Calu3 (cell line): ENCODE measurements at regions of chr19 and their contacts with region 1.

Region 1: GRCh38 chr19:48842789-48843162 is 6.5 kb upstream of the HSD17B14 start:
- DNase-seq: peak; percentile 67
- H3K4me3 Mint-ChIP-seq: no peak overlapping the region
- H3K27ac Mint-ChIP-seq: peak overlapping the region; percentile 3
- H3K4me1 Mint-ChIP-seq: no peaks in the 10 kb centered on the region
- H3K27me3 Mint-ChIP-seq: no peaks in the 10 kb centered on the region
- CTCF ChIP-seq: peak; percentile 82

Region 2: DNA sequence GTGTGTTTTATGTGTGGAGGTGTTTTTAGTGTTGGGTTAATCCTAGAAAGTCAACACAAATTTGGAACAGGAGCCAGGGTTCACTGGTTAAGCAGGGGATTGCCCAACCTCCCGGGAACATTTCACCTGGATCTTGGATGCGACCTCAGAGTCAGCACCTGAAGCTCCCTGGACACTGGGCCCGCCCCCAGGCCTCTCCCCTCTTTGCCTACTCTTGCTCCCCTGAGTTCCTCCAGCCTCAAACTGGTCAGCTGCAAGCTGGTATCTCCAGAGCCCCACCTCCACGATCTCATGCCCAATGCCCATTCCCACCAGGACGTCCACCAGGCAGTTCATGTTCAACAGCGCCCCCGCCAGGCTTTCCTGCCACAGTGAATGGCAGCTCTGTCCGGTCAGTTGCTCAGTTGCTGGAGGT is 16.2 kb before region 1 on chr19:
- CTCF ChIA-PET with region 1: interaction called, 14 read pairs
- intact Hi-C with region 1: no loop called
- DNase-seq: peak; percentile 50
- H3K4me3 Mint-ChIP-seq: no peak overlapping the region
- H3K27ac Mint-ChIP-seq: no peak overlapping the region
- H3K4me1 Mint-ChIP-seq: no peaks in the 10 kb centered on the region
- H3K27me3 Mint-ChIP-seq: no peaks in the 10 kb centered on the region
- CTCF ChIP-seq: no peak